ENCODE measurements at regions of chr12 and their contacts with region 1.

Region 1: GRCh38 chr12:50400598-50401364 is at the start of gene LARP4:
- DNase-seq: peak; percentile 97
- ATAC-seq: peak; percentile 86
- H3K4me3 ChIP-seq: peak within 1 kb of the TSS; percentile 95
- H3K27ac ChIP-seq: peak within 1 kb of the TSS; percentile 75
- H3K4me1 ChIP-seq: peaks cover 32% of the 10 kb centered on the region
- H3K27me3 ChIP-seq: no peaks in the 10 kb centered on the region
- CTCF ChIP-seq: no peak
- total RNA-seq, gene LARP4: 35.1 and 39.1 TPM in 2 replicates

Region 2: DNA sequence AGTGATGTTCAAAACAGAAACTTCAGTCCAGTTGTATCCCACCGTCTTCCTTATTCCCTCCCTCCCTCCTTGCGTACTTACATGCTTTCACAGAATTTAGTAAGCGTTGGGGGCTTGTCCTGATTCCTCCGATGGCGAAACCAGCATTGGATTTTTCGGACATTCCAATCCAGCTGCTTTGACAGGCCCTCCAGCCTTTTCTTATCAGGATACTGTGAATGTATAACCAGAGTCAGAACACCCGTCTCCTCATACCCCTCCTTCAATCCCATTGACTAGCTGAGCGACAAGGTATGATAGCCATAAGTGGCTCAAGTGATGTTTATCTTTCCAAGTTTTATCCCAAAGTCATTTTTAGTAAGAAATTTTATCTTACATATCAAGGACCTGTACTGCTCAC is 257.8 kb before region 1 on chr12:
- CTCF ChIA-PET with region 1: no interaction called
- POLR2A ChIA-PET with region 1: no interaction called
- intact Hi-C with region 1: no loop called
- DNase-seq: no peak
- ATAC-seq: no peak
- H3K4me3 ChIP-seq: no peak overlapping the region
- H3K27ac ChIP-seq: no peak overlapping the region
- H3K4me1 ChIP-seq: no peaks in the 10 kb centered on the region
- H3K27me3 ChIP-seq: no peaks in the 10 kb centered on the region
- CTCF ChIP-seq: no peak

Region 3: GRCh38 chr12:50201978-50202521 is 198.7 kb before region 1 on chr12:
- CTCF ChIA-PET with region 1: no interaction called
- POLR2A ChIA-PET with region 1: no interaction called
- intact Hi-C with region 1: loop called (anchors 10 kb)
- DNase-seq: peak; percentile 97
- ATAC-seq: peak; percentile 92
- H3K4me3 ChIP-seq: peak overlapping the region; percentile 61; the same call in 1 of the 2 replicates
- H3K27ac ChIP-seq: peak overlapping the region; percentile 99
- H3K4me1 ChIP-seq: peaks cover 51% of the 10 kb centered on the region
- H3K27me3 ChIP-seq: no peaks in the 10 kb centered on the region
- CTCF ChIP-seq: no peak

Region 4: DNA sequence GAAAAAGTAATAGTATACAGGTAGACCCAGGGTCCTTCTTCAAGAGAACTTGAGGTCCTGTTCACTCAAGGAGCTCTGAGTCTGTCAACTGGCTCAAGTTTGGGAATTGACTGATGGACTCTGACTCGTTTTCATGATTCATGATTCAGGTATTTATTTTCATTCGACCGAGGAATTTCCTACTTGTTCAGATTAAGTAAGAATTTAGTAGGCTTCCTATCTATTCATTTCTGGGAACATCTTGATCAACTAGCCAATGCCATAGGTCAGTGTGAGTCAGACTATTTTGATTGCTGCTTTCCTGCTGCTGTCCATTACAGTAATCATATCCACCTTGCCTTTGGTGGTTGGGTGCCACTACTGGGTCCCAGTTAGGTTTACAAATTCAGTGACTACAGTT is 10.5 kb before region 1 on chr12:
- CTCF ChIA-PET with region 1: no interaction called
- POLR2A ChIA-PET with region 1: interaction called, 3 read pairs
- intact Hi-C with region 1: loop called (anchors 1 kb)
- DNase-seq: peak; percentile 97
- ATAC-seq: peak; percentile 95
- H3K4me3 ChIP-seq: no peak overlapping the region
- H3K27ac ChIP-seq: peak overlapping the region; percentile 27
- H3K4me1 ChIP-seq: peaks cover 25% of the 10 kb centered on the region
- H3K27me3 ChIP-seq: no peaks in the 10 kb centered on the region
- CTCF ChIP-seq: no peak

Region 5: DNA sequence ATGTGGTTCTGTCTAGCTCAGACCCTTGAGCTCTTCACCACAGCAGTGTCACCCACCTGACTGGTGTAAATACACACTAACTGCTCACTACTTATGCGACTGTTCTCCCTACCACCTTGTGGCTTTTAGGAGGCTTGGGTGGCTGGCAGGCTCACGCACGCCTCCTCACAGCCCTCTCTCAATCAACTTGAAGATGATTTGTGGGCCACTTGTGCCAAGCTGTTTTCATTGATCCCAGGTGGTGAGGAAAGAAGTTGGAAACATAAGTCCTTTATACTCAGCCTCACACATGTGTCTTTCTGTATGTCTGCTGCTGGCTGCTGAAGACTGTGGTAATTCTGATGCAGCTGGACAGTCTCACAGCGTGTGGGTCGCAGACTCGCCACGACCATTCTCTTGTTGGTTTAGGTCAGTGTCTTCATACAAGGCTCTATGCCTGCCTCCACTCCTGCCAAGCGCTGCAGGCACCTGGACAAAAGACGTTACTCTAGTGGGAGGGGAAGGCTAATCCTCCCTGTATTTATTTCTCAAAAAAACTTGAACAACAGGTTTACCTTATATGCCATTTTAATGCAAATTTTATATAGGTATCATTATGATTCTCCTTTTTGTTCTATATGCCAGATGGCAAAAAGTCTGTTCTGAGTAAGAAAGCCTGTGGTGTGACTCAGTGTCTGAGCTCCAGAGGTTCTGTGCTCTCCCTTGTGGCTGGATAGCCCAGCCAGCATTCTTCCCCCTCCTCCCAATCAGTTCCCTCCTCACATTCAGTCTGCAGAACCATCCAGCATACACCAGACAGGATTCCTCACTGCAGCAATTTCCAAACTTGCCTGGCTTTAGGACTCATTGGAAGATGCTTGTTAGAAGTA is 219.6 kb after region 1 on chr12:
- CTCF ChIA-PET with region 1: no interaction called
- POLR2A ChIA-PET with region 1: no interaction called
- intact Hi-C with region 1: no loop called
- DNase-seq: peak; percentile 88
- ATAC-seq: peak; percentile 91
- H3K4me3 ChIP-seq: peak overlapping the region; percentile 9; the same call in 1 of the 2 replicates
- H3K27ac ChIP-seq: peak overlapping the region; percentile 70
- H3K4me1 ChIP-seq: peaks cover 47% of the 10 kb centered on the region
- H3K27me3 ChIP-seq: no peaks in the 10 kb centered on the region
- CTCF ChIP-seq: 0 out of 2 replicates have a peak, but pooled peaks have one; percentile 23